Right ventricle myocardium inferior (tissue), 1 donor: ENCODE measurements at regions of chr2 and their contacts with region 1.

Region 1: DNA sequence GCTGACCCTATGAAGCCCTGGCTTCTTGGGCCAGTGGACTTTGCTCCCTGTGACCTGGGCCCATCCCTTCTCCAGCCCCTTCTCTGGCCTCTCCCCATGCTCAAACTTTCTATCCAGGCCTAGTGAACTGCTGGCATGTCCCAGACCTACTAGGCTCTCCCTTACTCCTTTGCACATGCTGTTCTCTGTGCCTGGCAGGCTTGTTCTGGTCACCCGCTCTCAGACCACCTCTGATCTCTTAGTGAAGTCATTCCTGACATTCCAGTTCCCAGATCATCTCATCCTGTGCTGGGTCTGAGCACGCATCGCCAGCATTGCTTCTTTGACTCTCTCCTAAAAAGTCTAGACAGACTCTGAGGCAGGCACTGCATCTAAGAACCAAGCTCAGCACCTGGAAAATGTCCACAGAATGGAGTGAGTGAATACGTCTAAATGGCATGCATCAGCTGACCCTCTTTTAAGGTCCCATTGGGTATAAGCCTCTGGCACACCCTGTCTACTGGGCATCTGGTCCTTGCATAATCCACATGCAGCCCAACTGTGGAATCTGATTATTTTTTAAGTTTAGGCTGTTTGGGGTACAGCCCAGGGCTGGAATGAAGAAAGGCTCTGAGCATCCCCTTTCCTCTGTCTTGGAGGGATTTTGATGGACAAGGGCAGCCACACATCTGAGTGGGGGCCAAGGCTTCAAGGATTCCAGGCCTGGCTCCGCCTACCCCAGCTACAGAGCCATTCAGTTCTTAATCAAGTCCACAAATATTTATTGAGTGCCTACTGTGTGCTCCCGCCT is 130.6 kb upstream of the HAAO start:
- DNase-seq: peak; percentile 65
- ATAC-seq: peak; percentile 8

Region 2: GRCh38 chr2:42693013-42693615 is 229.9 kb before region 1 on chr2:
- intact Hi-C with region 1: no loop called
- DNase-seq: no peak
- ATAC-seq: peak; percentile 42

Region 3: GRCh38 chr2:42881732-42882131 is 41.3 kb before region 1 on chr2:
- intact Hi-C with region 1: loop called (anchors 1 kb)
- DNase-seq: no peak
- ATAC-seq: no peak

Region 4: DNA sequence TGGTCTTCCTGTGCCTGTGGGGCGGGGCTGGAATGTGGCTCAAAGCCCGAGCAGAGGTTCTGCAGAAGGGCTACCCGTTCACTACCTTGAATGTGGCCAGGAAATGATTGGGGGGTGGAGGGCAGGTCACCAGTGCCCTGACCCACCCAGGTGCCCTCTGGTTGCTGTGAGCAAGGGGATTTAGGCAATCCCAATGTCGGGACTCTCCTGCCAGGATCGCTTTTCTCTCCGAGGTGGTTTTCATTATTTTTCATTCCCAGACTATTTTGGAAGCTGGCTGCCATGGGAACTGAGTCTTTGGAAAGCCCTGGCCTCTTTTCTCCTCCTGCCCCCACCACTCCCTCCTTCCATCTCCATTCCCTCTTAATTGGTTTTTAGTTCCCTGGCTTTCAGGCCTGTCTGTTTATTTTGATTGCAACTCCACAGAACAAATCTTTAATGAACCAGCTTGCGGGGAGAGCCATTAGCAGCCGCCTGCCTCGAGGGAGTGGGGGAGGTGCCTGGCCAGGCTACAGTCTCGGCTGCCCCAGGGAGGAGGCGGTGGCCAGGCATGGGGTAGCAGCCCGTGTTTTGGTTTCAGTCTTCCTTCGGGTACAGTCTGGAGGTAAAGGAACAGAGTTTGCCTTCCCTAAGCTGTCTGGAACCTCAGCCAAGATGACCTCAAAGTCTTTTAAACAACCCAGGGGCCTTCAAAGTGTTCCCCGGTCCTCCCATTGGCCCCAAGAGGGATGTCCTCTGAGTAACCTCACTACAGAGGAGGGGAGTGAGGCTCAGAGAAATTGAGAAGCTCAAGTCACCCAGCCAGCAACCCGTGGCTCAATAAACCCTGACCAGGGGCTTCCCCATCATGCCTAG is 16.2 kb before region 1 on chr2:
- intact Hi-C with region 1: loop called (anchors 2 kb)
- DNase-seq: peak; percentile 88
- ATAC-seq: peak; percentile 67

Region 5: DNA sequence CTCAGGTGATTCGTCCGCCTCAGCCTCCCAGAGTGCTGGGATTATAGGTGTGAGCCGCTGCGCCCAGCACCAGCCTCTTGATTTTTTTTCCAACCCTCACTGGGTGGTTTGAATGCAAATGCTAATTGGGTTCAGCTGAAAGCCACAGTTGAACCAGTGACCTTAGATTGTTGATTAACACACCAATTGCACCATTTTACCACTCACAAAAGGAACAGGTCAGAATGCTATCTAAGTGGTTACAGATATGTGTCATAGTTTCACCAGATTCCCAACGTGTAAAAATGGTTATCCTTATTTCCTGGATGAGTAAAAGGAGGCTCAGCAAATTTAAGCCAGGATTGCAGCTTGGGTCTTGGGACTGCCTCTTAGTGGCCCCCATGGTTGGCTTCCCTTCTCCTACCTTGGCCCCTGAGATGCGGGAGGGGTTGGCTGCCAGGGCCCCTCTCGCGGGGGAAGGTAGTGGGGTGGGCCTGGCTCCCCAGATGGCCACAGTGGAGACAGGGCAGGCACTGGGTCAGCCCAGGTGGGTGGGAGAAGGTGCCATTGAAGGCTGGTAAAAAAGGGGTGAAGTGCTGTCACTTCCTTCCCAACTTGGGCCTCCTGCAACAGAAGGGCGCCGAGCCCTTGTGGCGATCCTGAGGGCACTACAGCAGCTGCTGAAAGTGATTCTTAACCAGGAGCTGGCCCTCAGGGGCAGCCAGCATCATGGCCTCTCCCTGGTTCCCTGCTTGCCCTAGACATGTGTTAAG is 34.3 kb after region 1 on chr2:
- intact Hi-C with region 1: no loop called
- DNase-seq: no peak
- ATAC-seq: no peak